ENCODE measurements at regions of chr16 and their contacts with region 1.

Region 1: GRCh38 chr16:21656795-21657768 is 4.7 kb upstream of the IGSF6 start:
- DNase-seq: peak; percentile 66
- ATAC-seq: no peak
- H3K4me3 Mint-ChIP-seq: no peak overlapping the region
- H3K27ac Mint-ChIP-seq: no peak overlapping the region
- H3K4me1 Mint-ChIP-seq: peaks cover 44% of the 10 kb centered on the region
- H3K27me3 Mint-ChIP-seq: no peaks in the 10 kb centered on the region

Region 2: GRCh38 chr16:21584817-21585216 is 72.3 kb before region 1 on chr16:
- CTCF ChIA-PET with region 1: interaction called, 13 read pairs
- POLR2A ChIA-PET with region 1: no interaction called
- DNase-seq: no peak
- ATAC-seq: no peak
- H3K4me3 Mint-ChIP-seq: no peak overlapping the region
- H3K27ac Mint-ChIP-seq: no peak overlapping the region
- H3K4me1 Mint-ChIP-seq: peaks cover 3% of the 10 kb centered on the region
- H3K27me3 Mint-ChIP-seq: peaks cover 4% of the 10 kb centered on the region

Region 3: DNA sequence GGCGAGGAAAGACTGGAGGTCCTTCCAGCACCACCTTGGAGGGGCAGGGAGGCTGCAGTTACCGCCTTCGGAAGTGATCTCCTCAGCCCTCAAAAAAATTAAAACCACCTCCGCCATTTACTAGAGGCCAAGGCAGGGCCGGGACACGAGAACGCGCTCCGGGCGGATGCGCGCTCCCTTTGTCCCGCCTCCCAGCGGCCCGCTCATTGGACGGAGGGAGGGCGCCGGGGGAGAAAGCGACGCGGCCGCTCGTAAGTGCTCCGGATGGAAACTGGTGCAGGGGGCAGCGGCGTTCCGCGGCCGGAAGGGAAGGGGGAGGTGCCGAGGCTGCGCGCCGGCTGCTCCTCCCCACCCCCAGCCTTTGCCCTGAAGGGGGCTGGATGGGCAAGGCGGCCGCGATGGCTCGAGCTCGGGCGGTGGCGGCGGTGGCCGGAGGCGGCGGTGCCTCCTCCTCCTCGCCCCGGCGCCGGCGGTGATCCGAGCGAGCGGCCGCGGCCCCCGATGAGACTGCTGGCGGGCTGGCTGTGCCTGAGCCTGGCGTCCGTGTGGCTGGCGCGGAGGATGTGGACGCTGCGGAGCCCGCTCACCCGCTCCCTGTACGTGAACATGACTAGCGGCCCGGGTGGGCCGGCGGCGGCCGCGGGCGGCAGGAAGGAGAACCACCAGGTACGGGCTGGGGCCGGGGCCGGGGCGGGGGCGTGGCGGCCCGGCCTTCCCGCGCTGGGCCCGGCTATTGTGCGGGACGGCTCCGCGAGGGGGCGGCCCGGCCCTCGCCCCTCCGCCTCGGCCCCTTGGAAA is 57.6 kb before region 1 on chr16 and contains the start of gene METTL9:
- CTCF ChIA-PET with region 1: interaction called, 13 read pairs
- POLR2A ChIA-PET with region 1: no interaction called
- DNase-seq: peak; percentile 95
- ATAC-seq: peak; percentile 93
- H3K4me3 Mint-ChIP-seq: peak within 1 kb of the TSS; percentile 93
- H3K27ac Mint-ChIP-seq: peak within 1 kb of the TSS; percentile 93
- H3K4me1 Mint-ChIP-seq: peaks cover 62% of the 10 kb centered on the region
- H3K27me3 Mint-ChIP-seq: peaks cover 3% of the 10 kb centered on the region
- total RNA-seq, gene METTL9: 99.2 to 101 TPM

Region 4: DNA sequence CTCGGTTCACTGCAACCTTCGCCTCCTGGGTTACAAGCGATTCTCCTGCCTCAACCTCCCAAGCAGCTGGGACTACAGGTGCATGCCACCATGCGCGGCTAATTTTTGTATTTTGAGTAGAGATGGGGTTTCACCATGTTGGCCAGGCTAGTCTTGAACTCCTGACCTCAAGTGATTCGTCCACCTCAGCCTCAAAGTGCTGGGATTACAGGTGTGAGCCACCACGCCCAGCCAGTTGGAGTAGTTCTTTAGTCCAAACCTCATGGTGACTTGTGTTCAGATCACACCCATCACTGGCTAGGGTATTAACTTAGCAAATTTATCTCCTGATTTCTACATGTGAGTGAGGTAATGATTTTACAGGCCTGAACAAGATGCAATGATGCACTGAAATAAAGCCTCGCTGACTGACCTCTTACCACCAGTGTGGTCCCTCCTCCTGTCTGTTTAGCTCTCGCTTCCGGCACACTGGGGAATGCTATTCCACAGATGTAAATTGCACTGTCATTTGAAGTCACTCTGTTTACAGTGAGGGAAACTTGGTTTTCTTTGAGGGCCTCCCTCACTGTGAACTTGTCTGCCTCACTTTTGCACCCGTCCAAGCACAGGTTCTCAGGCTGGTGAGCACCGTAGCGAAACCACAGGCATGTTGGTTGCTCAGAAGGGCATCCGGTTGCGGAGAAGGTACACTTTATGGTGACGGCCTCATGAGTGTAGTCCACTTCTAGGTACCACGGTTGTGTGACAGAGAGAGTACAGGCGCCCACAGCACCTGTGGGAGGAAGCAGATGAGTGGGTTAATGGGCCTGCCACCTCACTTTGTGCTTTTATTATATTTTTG is 10.1 kb before region 1 on chr16:
- CTCF ChIA-PET with region 1: interaction called, 79 read pairs
- POLR2A ChIA-PET with region 1: interaction called, 3 read pairs
- DNase-seq: peak; percentile 91
- ATAC-seq: peak; percentile 88
- H3K4me3 Mint-ChIP-seq: peak overlapping the region; percentile 77
- H3K27ac Mint-ChIP-seq: peak overlapping the region; percentile 88
- H3K4me1 Mint-ChIP-seq: peaks cover 60% of the 10 kb centered on the region
- H3K27me3 Mint-ChIP-seq: no peaks in the 10 kb centered on the region

Region 5: GRCh38 chr16:21708533-21709115 is 51.5 kb after region 1 on chr16:
- CTCF ChIA-PET with region 1: interaction called, 105 read pairs
- POLR2A ChIA-PET with region 1: interaction called, 7 read pairs
- DNase-seq: peak; percentile 92
- ATAC-seq: peak; percentile 82
- H3K4me3 Mint-ChIP-seq: no peak overlapping the region
- H3K27ac Mint-ChIP-seq: no peak overlapping the region
- H3K4me1 Mint-ChIP-seq: peaks cover 3% of the 10 kb centered on the region
- H3K27me3 Mint-ChIP-seq: no peaks in the 10 kb centered on the region